Calu3 (cell line): ENCODE measurements at regions of chr4 and their contacts with region 1.

Region 1: GRCh38 chr4:134470544-134470943 is 269.0 kb upstream of the PABPC4L start:
- DNase-seq: peak; percentile 24
- H3K4me3 Mint-ChIP-seq: no peak overlapping the region
- H3K27ac Mint-ChIP-seq: peak overlapping the region; percentile 54
- H3K4me1 Mint-ChIP-seq: no peaks in the 10 kb centered on the region
- H3K27me3 Mint-ChIP-seq: no peaks in the 10 kb centered on the region
- CTCF ChIP-seq: no peak

Region 2: GRCh38 chr4:134544303-134544761 is 73.8 kb after region 1 on chr4:
- CTCF ChIA-PET with region 1: no interaction called
- intact Hi-C with region 1: no loop called
- DNase-seq: no peak
- H3K4me3 Mint-ChIP-seq: no peak overlapping the region
- H3K27ac Mint-ChIP-seq: no peak overlapping the region
- H3K4me1 Mint-ChIP-seq: no peaks in the 10 kb centered on the region
- H3K27me3 Mint-ChIP-seq: no peaks in the 10 kb centered on the region
- CTCF ChIP-seq: no peak

Region 3: GRCh38 chr4:134650461-134650860 is 179.9 kb after region 1 on chr4:
- CTCF ChIA-PET with region 1: interaction called, 4 read pairs
- intact Hi-C with region 1: loop called (anchors 2 kb)
- DNase-seq: no peak
- H3K4me3 Mint-ChIP-seq: no peak overlapping the region
- H3K27ac Mint-ChIP-seq: no peak overlapping the region
- H3K4me1 Mint-ChIP-seq: no peaks in the 10 kb centered on the region
- H3K27me3 Mint-ChIP-seq: no peaks in the 10 kb centered on the region
- CTCF ChIP-seq: no peak

Region 4: GRCh38 chr4:134777606-134778005 is 307.1 kb after region 1 on chr4:
- CTCF ChIA-PET with region 1: no interaction called
- intact Hi-C with region 1: loop called (anchors 1 kb)
- DNase-seq: peak; percentile 15
- H3K4me3 Mint-ChIP-seq: no peak overlapping the region
- H3K27ac Mint-ChIP-seq: no peak overlapping the region
- H3K4me1 Mint-ChIP-seq: no peaks in the 10 kb centered on the region
- H3K27me3 Mint-ChIP-seq: no peaks in the 10 kb centered on the region
- CTCF ChIP-seq: no peak

Region 5: GRCh38 chr4:134906404-134907023 is 436.0 kb after region 1 on chr4:
- CTCF ChIA-PET with region 1: no interaction called
- intact Hi-C with region 1: loop called (anchors 2 kb)
- DNase-seq: peak; percentile 16
- H3K4me3 Mint-ChIP-seq: no peak overlapping the region
- H3K27ac Mint-ChIP-seq: no peak overlapping the region
- H3K4me1 Mint-ChIP-seq: no peaks in the 10 kb centered on the region
- H3K27me3 Mint-ChIP-seq: no peaks in the 10 kb centered on the region
- CTCF ChIP-seq: no peak